ENCODE measurements at regions of chr1 and their contacts with region 1.

Region 1: DNA sequence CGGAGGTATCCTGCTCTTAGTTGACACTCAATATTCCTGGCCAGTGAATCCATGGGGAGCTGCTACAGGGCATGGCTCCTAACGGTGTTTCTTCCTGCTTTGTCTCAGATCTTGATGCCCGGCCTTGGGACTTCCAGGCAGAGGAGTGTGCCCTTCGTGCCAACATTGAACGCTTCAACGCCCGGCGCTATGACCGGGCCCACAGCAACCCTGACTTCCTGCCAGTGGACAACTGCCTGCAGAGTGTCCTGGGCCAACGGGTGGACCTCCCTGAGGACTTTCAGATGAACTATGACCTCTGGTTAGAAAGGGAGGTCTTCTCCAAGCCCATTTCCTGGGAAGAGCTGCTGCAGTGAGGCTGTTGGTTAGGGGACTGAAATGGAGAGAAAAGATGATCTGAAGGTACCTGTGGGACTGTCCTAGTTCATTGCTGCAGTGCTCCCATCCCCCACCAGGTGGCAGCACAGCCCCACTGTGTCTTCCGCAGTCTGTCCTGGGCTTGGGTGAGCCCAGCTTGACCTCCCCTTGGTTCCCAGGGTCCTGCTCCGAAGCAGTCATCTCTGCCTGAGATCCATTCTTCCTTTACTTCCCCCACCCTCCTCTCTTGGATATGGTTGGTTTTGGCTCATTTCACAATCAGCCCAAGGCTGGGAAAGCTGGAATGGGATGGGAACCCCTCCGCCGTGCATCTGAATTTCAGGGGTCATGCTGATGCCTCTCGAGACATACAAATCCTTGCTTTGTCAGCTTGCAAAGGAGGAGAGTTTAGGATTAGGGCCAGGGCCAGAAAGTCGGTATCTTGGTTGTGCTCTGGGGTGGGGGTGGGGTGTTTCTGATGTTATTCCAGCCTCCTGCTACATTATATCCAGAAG is 16.7 kb downstream of the ALX3 start:
- DNase-seq: peak; percentile 85
- ATAC-seq: peak; percentile 79

Region 2: DNA sequence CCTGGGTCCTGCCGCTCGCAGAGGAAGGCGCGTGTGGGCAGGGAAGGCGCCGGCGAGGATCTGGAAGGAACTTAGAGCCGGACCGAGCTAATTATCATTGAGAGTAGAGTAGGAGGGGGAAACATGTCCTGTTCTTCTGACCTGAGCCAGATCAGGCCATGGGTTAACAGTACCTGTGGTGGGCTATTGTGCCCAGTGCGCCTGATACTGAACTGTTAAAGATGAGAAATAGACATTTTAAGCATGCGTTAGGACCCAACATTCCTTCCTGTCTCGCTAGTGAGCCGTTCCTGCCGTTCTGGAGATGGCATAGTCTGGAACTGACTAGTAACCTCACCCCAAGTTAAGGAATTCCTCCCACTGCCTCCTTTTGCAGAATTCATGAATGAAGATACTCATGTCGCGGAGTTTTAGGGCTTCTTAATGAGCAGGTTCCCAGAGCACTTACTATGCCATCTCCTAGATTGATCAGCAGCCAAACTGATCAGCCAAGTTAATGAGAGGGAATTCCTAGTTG is 18.5 kb before region 1 on chr1:
- intact Hi-C with region 1: no loop called
- DNase-seq: no peak
- ATAC-seq: no peak

Region 3: DNA sequence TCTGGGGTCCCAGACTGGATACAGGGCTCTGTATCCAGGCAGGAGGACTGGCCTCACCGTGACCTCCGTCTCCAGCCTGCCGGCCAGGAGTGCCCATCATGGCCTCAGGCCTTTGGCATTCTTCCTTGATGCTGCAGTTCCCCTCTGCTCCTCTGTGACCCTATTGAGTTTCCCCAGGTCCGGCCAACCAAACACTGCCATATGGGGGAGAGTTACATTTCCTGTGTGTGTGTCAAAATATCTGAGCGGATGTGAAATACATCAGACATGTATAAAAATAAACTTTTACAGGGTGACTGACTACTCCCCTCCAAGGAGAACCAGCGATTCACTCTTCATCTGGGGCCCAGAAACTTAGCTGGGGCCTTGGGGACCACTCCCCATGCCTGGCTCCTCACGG is 48.3 kb after region 1 on chr1:
- intact Hi-C with region 1: loop called (anchors 5 kb)
- DNase-seq: no peak
- ATAC-seq: no peak

Measured in sciatic nerve (tissue), 2 donors.